Naive thymus-derived CD4-positive, alpha-beta T cell (primary cell): ENCODE measurements at regions of chr19 and their contacts with region 1.

Region 1: DNA sequence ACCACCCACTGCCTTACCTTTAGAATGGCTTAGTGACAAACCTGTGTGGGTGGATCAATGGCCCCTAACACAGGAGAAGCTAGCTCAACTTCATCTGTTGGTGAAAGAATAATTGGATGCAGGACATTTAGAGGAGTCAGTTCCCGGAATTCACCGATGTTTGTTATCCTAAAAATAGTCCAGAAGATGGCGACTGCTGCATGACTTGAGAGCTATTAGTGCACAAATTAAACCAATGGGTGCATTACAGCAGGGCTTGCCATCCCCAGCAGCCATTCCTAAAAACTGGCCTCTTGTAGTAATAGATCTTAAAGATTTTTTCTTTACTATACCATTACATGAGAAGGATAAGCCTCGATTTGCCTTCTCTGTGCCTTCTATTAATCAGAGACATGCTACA is 46.8 kb upstream of the ZNF726 start:
- DNase-seq: no peak
- ATAC-seq: no peak
- H3K4me3 ChIP-seq: no peak overlapping the region
- H3K4me3 Mint-ChIP-seq: no peak overlapping the region
- H3K27ac ChIP-seq: no peak overlapping the region
- H3K27ac Mint-ChIP-seq: no peak overlapping the region
- H3K4me1 ChIP-seq: no peaks in the 10 kb centered on the region
- H3K4me1 Mint-ChIP-seq: no peaks in the 10 kb centered on the region
- H3K27me3 ChIP-seq: no peaks in the 10 kb centered on the region
- H3K27me3 Mint-ChIP-seq: no peaks in the 10 kb centered on the region

Region 2: DNA sequence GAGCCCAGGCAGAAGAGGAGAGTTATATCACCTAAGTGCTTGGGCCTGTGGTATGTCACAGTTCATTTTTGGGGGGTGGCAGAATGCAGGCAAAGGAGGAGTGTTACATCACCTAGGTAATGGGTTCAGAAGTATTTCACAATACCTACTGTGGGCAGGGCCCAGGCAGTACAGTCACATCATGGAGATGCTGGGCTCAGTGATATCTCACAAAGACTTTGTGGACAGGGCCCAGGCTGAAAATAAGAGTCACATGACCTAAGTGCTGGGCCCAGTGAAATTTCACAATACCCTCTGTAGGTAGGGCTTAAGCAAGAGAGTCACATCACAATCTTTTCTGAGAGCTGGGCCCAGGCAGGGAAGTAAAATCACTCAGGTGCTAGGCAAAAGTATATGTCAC is 852.2 kb before region 1 on chr19:
- CTCF ChIA-PET with region 1: no interaction called
- POLR2A ChIA-PET with region 1: no interaction called
- intact Hi-C with region 1: loop called in 1 of 2 experiments (anchors 10 kb)
- DNase-seq: no peak
- ATAC-seq: no peak
- H3K4me3 ChIP-seq: no peak overlapping the region
- H3K4me3 Mint-ChIP-seq: no peak overlapping the region
- H3K27ac ChIP-seq: no peak overlapping the region
- H3K27ac Mint-ChIP-seq: no peak overlapping the region
- H3K4me1 ChIP-seq: no peaks in the 10 kb centered on the region
- H3K4me1 Mint-ChIP-seq: peaks cover 0 to 1% (median 0%) of the 10 kb centered on the region in 7 donors
- H3K27me3 ChIP-seq: no peaks in the 10 kb centered on the region
- H3K27me3 Mint-ChIP-seq: no peaks in the 10 kb centered on the region

Region 3: DNA sequence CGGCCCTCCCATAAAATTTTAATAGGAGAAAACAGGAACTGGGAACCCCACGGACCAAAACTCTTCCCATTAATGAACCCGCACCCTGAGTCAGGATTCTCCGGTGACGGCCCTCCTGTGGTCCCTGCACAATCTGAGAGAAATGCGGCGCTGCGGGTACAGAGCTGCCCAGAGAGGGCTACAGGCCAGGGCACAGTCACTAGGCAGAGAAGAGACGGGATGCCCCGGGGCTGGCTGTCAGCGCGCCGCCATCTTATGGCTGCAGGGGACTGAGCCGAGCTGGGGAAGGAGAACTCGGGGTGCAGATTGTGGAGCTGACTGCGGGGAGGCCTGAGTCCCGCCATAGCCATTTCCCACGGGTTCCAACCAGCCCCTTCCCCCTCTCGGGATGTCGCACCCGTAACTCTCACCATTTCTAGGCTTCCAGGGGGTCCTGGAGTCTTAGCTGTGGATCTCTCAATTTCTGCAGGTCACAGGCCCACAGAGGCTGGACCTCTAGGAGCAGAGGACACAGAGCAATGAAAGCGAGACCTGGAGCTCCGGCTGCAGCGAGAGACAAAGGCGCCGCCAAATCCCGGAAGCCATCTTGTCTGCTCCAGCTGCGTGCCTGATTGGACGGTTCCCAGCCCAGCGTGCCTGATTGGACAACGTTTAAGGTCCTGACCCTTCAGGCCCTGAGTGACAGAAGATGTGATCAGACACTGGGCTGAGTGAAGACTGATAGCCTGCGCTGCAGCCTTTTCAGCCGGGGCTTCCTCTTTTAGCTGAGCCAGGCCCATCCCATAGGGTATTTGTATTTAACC is 181.1 kb before region 1 on chr19 and contains the start of gene ZNF675:
- CTCF ChIA-PET with region 1: no interaction called
- POLR2A ChIA-PET with region 1: no interaction called
- intact Hi-C with region 1: no loop called
- DNase-seq: peak; percentile 68 to 90 (median 87)
- ATAC-seq: peak; percentile 95
- H3K4me3 ChIP-seq: peak within 1 kb of the TSS; percentile 94
- H3K4me3 Mint-ChIP-seq: peak within 1 kb of the TSS; percentile 96 to 99 (median 98)
- H3K27ac ChIP-seq: peak within 1 kb of the TSS; percentile 95
- H3K27ac Mint-ChIP-seq: peak within 1 kb of the TSS; percentile 96 to 99 (median 98)
- H3K4me1 ChIP-seq: peaks cover 9 to 30% of the 10 kb centered on the region in 2 donors
- H3K4me1 Mint-ChIP-seq: peaks cover 14 to 59% (median 50%) of the 10 kb centered on the region in 7 donors
- H3K27me3 ChIP-seq: no peaks in the 10 kb centered on the region
- H3K27me3 Mint-ChIP-seq: no peaks in the 10 kb centered on the region
- total RNA-seq, gene ZNF675: 17.5 to 39.6 (median 24.0) TPM

Region 4: GRCh38 chr19:23799321-23799720 is 68.6 kb before region 1 on chr19:
- CTCF ChIA-PET with region 1: no interaction called
- POLR2A ChIA-PET with region 1: no interaction called
- intact Hi-C with region 1: no loop called
- DNase-seq: peak in 7 of 9 donors; percentile 46 to 66 (median 61)
- ATAC-seq: peak; percentile 92
- H3K4me3 ChIP-seq: peak overlapping the region; percentile 31
- H3K4me3 Mint-ChIP-seq: peak overlapping the region; percentile 77 to 91 (median 84)
- H3K27ac ChIP-seq: peak overlapping the region; percentile 67
- H3K27ac Mint-ChIP-seq: peak overlapping the region; percentile 84 to 97 (median 92)
- H3K4me1 ChIP-seq: peaks cover 6% of the 10 kb centered on the region in 2 donors
- H3K4me1 Mint-ChIP-seq: peaks cover 10 to 49% (median 34%) of the 10 kb centered on the region in 7 donors
- H3K27me3 ChIP-seq: no peaks in the 10 kb centered on the region
- H3K27me3 Mint-ChIP-seq: no peaks in the 10 kb centered on the region